Dorsolateral prefrontal cortex (tissue), 120 donors: ENCODE measurements at regions of chr16 and their contacts with region 1.

Region 1: DNA sequence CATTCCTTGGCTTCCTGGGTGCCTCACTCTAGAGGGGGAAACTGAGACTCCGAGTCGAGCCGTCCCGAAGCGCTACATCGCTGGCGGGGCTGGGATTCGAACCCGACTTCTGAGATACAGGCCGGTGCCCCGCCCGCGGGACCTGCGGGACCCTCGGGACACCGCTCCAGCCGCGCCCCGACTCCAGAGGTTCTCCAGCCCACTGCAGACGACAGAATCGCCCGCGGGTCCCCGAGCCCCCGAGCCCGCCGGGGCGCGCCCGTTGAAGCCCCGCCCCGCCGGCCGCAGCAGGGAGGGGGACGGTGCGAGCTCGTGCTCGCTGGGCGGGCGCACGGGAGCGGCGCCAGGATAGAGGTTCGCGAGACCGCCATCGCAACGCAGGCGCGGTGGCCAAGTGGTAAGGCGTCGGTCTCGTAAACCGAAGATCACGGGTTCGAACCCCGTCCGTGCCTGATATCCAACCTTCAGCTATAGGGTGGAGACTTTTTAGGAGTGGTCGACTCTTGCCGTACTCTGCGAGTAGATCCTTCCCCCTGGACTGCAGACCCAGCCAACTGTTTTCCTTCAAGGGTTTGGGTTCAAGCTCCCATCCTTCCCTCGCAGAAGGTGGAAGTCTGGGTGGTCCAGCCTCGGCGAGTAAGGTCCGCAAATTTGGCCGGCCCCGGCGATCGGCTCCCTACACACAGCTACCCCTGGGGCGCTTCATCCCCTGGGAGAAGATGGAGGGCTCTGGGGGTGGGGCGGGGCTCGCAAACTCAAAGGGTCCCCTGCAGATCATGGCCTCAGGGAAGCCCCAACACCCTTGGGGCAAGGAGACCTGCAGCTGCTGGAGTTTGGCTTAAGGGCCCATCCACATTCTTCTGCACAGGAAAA is 214.6 kb downstream of the MRTFB start:
- DNase-seq: peak; percentile 87 to 94 (median 93)
- H3K4me3 ChIP-seq: peak overlapping the region; percentile 58 to 95 (median 83)
- H3K27ac ChIP-seq: peak overlapping the region; percentile 73 to 94 (median 88)
- H3K27me3 ChIP-seq: no peaks in the 10 kb centered on the region
- CTCF ChIP-seq: peak in 18 of 56 donors; percentile 1 to 40 (median 16)

Region 2: DNA sequence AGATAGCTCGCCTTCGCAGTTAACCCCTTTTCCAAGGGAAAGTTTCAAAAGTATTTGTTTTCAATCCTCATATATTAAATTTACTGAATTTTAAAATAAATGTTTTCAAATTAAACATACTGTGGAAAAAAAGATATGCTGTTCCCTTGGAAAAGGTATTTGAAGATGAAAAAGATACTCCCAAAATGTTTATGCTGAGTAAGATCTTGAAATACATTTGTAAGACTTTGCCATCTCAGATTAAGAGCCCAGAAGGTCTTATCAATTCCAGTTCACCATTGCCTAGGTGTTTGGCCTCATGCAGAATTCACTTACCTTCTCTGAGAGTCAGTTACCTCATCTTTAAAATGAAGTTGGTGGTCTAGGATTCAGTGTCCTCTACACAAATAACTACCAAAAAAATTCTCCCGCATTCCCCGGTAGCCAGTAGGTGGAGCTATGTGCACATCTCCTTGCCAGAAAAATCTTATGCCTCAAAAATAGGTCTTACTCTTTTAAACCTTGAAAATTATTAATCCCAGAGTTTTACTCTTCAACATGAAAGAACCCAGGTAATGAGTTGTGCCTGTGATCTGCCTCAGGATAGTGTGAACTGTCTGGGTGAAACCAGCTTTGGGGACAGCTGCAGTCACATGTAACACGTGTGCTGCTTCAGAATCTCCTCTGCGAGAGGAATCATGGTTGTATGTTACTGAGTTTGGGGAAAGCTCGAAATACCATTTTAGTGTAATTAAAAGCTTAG is 36.3 kb before region 1 on chr16:
- intact Hi-C with region 1: loop called in 1 of 2 experiments (anchors 5 kb)
- DNase-seq: peak in 3 of 10 donors; percentile 17 to 61 (median 59)
- H3K4me3 ChIP-seq: no peak overlapping the region
- H3K27ac ChIP-seq: peak overlapping the region in 2 of 59 donors; percentile 22 to 34
- H3K27me3 ChIP-seq: no peaks in the 10 kb centered on the region
- CTCF ChIP-seq: peak; percentile 65 to 93 (median 84)

Region 3: DNA sequence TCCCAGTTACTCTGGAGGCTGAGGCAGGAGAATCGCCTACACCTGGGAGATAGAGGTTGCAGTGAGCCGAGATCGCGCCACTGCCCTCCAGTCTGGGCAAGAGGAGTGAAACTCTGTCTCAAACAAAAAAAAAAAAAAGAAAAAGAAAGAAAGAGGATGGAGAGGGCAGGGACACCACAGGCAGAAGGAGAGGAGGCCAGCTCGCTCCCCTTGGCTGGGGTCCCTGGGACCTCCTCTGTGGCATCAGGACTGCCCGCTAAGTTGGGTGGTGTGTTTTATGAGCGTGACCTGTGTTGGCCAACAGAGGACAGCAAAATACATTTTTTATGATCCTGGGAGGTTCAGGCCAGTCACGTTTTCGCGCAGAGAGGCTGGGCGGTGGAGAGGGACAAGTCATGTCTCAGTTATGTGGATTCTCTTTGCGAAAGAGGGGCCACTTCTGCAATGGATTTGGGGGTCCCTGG is 15.0 kb after region 1 on chr16:
- intact Hi-C with region 1: loop called in 1 of 2 experiments (anchors 2 kb)
- DNase-seq: peak in 6 of 10 donors; percentile 62 to 70 (median 64)
- H3K4me3 ChIP-seq: peak overlapping the region in 53 of 59 donors; percentile 13 to 93 (median 85)
- H3K27ac ChIP-seq: peak overlapping the region in 25 of 59 donors; percentile 3 to 83 (median 59)
- H3K27me3 ChIP-seq: no peaks in the 10 kb centered on the region
- CTCF ChIP-seq: peak in 55 of 56 donors; percentile 34 to 78 (median 63)

Region 4: GRCh38 chr16:14364386-14365204 is 78.8 kb after region 1 on chr16:
- intact Hi-C with region 1: no loop called
- DNase-seq: peak in 2 of 10 donors; percentile 12 to 59
- H3K4me3 ChIP-seq: no peak overlapping the region
- H3K27ac ChIP-seq: no peak overlapping the region
- H3K27me3 ChIP-seq: no peaks in the 10 kb centered on the region
- CTCF ChIP-seq: no peak

Region 5: DNA sequence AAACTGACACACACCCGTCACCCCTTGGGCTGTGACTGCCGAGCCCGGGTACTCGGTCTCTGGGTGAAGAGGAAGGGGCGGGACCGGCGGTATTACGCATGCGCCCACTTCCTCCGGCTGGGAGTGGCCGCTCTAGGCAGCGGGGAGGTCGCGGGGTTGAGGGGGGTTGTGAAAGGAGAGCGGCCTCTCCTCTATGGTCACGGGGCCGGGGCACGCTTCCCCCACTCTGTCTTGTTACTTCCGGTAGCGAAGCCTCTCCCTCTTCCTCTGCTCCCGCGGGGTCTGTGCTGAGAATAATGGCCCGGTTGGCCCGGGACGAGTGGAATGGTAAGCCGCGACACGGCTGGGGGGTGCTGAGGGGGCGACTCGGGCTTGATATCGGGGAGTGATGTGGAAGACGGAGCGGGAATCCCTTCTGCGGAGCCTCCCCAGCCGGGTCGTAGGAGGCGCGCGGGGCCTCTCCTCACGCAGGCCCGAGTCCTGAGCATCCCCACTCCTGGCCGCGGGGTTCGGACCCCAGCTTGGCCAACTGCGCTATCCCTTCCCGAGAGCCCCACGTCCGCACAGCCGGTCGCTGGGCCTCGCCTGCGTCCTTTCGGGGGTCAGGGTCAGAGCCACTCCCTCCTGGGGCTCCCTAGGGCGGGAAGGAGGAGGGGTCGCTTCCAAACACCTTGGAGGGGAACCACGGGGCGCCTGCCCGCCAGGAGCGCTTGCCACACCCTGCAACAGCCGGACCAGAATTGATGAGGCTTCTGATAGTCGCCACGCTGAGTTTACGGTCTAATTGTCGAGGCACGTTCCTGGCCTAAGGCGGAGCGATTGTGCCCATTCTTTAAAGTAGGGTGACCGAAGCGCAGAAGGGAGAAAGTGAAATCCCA is 347.2 kb after region 1 on chr16 and contains the start of gene BFAR:
- intact Hi-C with region 1: loop called in 1 of 2 experiments (anchors 5 kb)
- DNase-seq: peak; percentile 98 to 100 (median 99)
- H3K4me3 ChIP-seq: peak within 1 kb of the TSS; percentile 76 to 100 (median 96)
- H3K27ac ChIP-seq: peak within 1 kb of the TSS; percentile 10 to 96 (median 89)
- H3K27me3 ChIP-seq: no peaks in the 10 kb centered on the region
- CTCF ChIP-seq: peak in 28 of 56 donors; percentile 7 to 56 (median 26)
- total RNA-seq, gene BFAR: 26.5 to 50.2 (median 36.3) TPM